ENCODE measurements at regions of chr2 and their contacts with region 1.

Region 1: DNA sequence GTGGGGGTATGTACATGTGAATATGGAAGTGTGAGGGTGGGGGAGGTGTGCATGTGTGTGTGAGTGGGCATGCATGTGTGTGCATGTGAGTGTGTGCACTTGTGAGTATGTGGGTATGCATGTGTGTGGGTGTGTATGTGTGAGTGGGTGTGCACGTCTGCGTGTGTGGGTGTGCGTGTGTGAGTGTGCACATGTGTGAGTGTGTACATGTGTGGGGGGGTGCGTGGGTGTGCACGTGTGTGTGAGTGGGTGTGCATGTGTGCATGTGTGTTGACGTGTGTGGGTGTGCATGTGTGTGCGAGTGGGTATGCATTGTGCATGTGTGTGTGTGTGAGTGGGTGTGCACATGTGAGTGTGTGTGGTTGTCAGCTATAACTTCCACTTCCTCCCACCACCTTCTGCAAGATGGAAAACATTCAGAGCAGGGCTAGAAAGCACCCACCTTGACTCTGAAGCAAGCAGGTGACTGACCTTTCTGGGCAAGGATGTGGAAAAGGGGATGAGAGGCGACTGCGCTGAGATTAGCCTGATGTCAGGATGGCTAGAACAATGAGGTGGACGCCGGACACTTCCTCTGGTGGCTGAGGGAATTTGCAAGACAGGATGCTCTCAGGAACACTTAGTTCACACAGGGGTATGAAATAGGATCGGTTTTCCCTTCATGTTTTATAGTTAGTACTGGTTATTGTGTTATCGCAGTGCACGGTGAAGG is 103.6 kb downstream of the ACKR3 start:
- DNase-seq: peak; percentile 55

Region 2: DNA sequence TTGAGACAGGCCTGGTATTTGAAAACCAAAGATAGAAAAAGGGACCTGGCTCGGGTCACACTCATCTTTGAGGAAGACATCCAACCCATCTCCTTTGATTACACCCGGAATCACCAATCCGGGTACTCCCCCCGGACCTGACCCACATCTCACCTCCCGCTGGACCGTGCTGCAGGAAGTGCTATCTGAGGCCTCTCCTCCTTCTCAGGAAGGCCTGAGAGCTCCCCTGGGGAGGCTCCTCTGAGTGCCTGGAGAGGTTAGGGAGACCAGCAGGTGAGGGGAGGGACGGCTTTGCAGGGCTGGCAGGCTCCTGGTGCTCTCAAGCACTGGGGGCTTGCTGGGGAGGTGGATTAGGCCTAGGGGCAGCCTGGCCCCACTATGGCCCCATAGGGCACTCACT is 67.2 kb after region 1 on chr2:
- intact Hi-C with region 1: loop called in 1 of 2 experiments (anchors 2 kb)
- DNase-seq: no peak